ENCODE measurements at regions of chr3 and their contacts with region 1.

Region 1: GRCh38 chr3:137970914-137971831 is 38.8 kb upstream of the CLDN18 start:
- DNase-seq: peak; percentile 72
- H3K4me3 ChIP-seq: peak overlapping the region in 1 of 2 experiments; percentile 40; a peak in 3 of 4 replicates
- H3K27ac ChIP-seq: no peak overlapping the region
- H3K4me1 ChIP-seq: peaks cover 0 to 3% of the 10 kb centered on the region in 2 experiments; a peak in 1 of 4 replicates
- H3K27me3 ChIP-seq: no peaks in the 10 kb centered on the region
- CTCF ChIP-seq: peak; percentile 85
- EP300 ChIP-seq: no peak
- RAD21 ChIP-seq: peak; percentile 91

Region 2: GRCh38 chr3:137099364-137100219 is 871.6 kb before region 1 on chr3:
- CTCF ChIA-PET with region 1: interaction called, 64 read pairs
- POLR2A ChIA-PET with region 1: no interaction called
- DNase-seq: no peak
- H3K4me3 ChIP-seq: no peak overlapping the region
- H3K27ac ChIP-seq: no peak overlapping the region
- H3K4me1 ChIP-seq: no peaks in the 10 kb centered on the region
- H3K27me3 ChIP-seq: no peaks in the 10 kb centered on the region
- CTCF ChIP-seq: no peak
- EP300 ChIP-seq: no peak
- RAD21 ChIP-seq: no peak

Region 3: DNA sequence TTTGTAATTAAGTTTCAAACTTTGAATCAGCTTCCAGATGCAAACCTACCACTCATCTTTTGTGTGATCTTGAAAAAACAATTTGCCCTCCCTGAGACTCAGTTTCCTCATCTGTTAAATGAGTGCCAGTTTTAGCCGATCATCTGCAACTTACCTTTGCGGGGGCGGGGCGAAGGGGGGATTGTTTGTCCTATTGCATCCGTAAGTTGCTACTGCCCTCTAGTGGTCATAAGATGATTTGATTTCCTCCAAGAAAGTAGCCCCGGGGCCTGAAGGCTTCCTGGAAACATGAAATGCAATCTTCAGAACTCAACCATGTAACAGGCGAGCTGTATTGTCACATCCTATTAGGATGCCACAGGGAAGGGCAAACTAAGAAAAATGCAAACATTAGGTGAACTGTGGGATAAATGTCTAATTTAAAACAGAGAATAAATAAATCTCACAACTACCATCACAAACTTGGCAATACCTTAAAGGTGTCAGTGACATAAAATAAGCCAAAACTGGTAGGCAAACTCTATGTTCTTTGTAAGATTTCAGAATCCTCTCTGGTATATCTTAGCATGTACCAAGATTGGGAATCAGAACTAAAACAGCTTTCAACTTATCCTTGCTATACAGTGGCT is 24.7 kb before region 1 on chr3:
- CTCF ChIA-PET with region 1: interaction called, 30 read pairs
- POLR2A ChIA-PET with region 1: no interaction called
- DNase-seq: peak; percentile 59
- H3K4me3 ChIP-seq: peak overlapping the region in 1 of 2 experiments; percentile 24; a peak in 1 of 4 replicates
- H3K27ac ChIP-seq: no peak overlapping the region
- H3K4me1 ChIP-seq: no peaks in the 10 kb centered on the region
- H3K27me3 ChIP-seq: no peaks in the 10 kb centered on the region
- CTCF ChIP-seq: peak; percentile 86
- EP300 ChIP-seq: no peak
- RAD21 ChIP-seq: peak; percentile 80

Region 4: DNA sequence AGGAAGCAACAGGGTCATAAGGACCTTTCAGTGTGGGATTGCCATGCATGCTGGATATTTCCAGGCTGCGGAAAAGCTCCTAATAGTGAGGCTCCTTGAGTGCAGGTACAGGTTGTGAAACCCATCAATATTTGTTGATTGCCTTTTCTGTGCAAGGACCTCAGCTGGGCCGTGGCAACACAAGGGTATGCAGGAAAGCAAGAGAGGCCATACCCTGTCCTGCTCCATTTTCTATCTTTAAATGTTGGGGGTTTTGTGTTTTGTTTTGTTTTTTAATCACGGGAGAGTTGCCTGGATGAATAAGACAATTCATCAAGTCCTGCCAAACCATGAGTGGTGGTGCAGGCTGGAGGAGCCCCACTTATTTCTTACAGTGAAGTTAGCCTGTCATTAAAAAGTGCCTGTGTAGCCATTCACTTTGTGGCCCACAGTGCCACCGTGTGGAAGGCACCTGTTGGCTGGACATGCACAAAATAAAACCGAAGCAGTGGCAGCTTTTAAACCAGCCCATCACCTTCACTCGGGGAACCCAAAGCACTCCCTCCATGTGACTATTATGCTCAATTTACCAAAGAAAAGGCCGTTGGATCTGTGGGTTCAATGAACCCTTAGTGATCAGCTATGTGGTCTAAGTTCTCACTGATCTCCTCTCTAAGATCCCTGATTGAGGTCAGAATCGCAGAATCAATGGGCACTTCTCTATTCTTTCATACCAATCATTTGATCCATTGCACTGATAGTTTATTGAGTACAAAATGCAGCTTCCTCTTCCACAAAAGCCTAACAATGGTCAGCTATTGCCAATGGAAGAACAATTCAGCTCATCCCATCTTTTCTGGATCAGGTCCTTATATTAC is 81.0 kb after region 1 on chr3:
- CTCF ChIA-PET with region 1: interaction called, 13 read pairs
- POLR2A ChIA-PET with region 1: no interaction called
- DNase-seq: peak; percentile 34
- H3K4me3 ChIP-seq: no peak overlapping the region
- H3K27ac ChIP-seq: no peak overlapping the region
- H3K4me1 ChIP-seq: no peaks in the 10 kb centered on the region; a peak in 1 of 4 replicates
- H3K27me3 ChIP-seq: no peaks in the 10 kb centered on the region
- CTCF ChIP-seq: peak; percentile 72
- EP300 ChIP-seq: no peak
- RAD21 ChIP-seq: peak; percentile 70

Region 5: DNA sequence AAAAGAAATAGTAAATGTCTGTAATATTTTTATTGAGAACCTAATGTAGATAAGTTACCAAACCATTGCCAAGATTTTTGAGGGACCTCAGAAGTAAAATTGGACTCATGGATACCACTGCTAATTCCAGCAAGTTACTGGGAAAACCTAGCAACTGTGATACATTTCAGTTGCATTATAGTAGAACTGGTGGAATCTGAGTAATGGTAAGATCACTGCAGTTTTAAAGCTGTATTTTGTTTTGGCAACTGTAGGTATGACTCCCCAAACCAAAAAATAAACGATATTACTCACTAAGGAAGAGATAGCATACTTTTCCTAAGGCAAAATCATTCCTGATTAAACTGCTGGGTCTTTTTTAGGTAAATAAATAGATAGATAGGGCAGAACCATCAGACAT is 269.9 kb after region 1 on chr3:
- CTCF ChIA-PET with region 1: no interaction called
- POLR2A ChIA-PET with region 1: no interaction called
- DNase-seq: no peak
- H3K4me3 ChIP-seq: no peak overlapping the region
- H3K27ac ChIP-seq: peak overlapping the region in 1 of 2 experiments; percentile 27; a peak in 1 of 4 replicates
- H3K4me1 ChIP-seq: no peaks in the 10 kb centered on the region; a peak in 1 of 4 replicates
- H3K27me3 ChIP-seq: no peaks in the 10 kb centered on the region
- CTCF ChIP-seq: no peak
- EP300 ChIP-seq: no peak
- RAD21 ChIP-seq: no peak